SK-N-SH (cell line): ENCODE measurements at regions of chr6 and their contacts with region 1.

Region 1: DNA sequence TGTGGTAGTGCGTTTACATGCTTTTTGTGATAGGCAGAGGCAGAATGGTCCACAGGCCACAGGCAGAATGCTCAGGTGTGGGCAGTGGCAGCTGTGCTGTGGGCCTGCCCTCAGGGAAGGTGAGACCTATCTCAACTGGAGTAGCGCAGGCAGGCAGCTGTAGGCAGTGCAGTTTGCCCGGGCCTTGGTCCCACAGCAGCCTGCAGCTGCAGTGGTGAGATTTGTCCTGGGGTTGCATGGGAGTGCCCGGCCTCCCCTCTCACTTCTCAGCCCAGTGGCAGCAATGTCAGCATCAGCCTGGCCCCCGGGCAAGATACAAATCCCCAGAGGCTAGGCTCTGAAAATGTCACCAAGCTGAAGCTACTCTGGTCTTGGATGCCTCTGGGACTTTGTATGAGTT is 6.1 kb upstream of the PPIL4 start:
- DNase-seq: no peak
- H3K4me3 ChIP-seq: no peak overlapping the region
- H3K27ac ChIP-seq: no peak overlapping the region
- H3K4me1 ChIP-seq: no peaks in the 10 kb centered on the region
- H3K27me3 ChIP-seq: no peaks in the 10 kb centered on the region
- CTCF ChIP-seq: no peak
- EP300 ChIP-seq: no peak
- RAD21 ChIP-seq: no peak

Region 2: GRCh38 chr6:149565527-149566409 is 13.8 kb after region 1 on chr6 and contains the start of gene GINM1:
- CTCF ChIA-PET with region 1: interaction called, 17 read pairs
- POLR2A ChIA-PET with region 1: no interaction called
- DNase-seq: peak; percentile 99
- H3K4me3 ChIP-seq: peak within 1 kb of the TSS; percentile 86 to 91
- H3K27ac ChIP-seq: peak within 1 kb of the TSS; percentile 66 to 84
- H3K4me1 ChIP-seq: peaks cover 2 to 4% of the 10 kb centered on the region in 2 experiments; a peak in 3 of 4 replicates
- H3K27me3 ChIP-seq: no peaks in the 10 kb centered on the region
- CTCF ChIP-seq: peak; percentile 67
- EP300 ChIP-seq: no peak
- RAD21 ChIP-seq: peak; percentile 68
- polyA plus RNA-seq, gene GINM1: 24.4 and 27.8 TPM in 2 replicates

Region 3: GRCh38 chr6:149636116-149636515 is 84.2 kb after region 1 on chr6:
- CTCF ChIA-PET with region 1: no interaction called
- POLR2A ChIA-PET with region 1: no interaction called
- DNase-seq: no peak
- H3K4me3 ChIP-seq: no peak overlapping the region
- H3K27ac ChIP-seq: no peak overlapping the region
- H3K4me1 ChIP-seq: no peaks in the 10 kb centered on the region
- H3K27me3 ChIP-seq: no peaks in the 10 kb centered on the region
- CTCF ChIP-seq: no peak
- EP300 ChIP-seq: no peak
- RAD21 ChIP-seq: no peak